Sigmoid colon (tissue), 7 donors: ENCODE measurements at regions of chr4 and their contacts with region 1.

Region 1: DNA sequence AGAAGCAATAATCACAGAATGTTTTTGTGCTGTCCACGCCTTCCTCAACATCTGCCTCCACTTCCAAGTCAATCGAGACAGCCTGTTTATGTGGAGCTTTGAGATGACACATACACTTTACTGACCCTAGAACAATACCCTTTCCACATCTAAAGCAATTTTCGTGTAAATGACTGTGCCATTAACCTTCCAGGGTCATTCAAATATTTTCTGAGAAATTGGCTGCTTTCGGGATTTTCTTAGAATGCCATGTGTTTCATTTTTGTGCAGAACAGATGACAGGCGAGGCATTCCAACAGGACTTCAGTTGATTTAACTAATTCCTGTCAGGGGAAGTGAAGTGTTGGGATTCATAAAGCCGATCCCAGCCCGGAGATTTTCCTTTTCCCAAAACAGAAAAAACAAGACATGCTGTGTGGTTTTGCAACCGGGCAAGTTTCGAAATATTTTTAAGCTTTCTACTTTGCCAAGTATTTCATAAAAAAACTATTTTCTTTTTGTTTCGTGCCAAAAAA is 73.9 kb downstream of the SORBS2 start:
- DNase-seq: peak; percentile 76
- H3K4me3 ChIP-seq: peak overlapping the region; percentile 4 to 38 (median 15)
- H3K27ac ChIP-seq: peak overlapping the region; percentile 81 to 88 (median 84)
- H3K4me1 ChIP-seq: peaks cover 0 to 85% (median 65%) of the 10 kb centered on the region in 4 donors
- H3K27me3 ChIP-seq: no peaks in the 10 kb centered on the region
- CTCF ChIP-seq: no peak
- EP300 ChIP-seq: no peak
- POLR2A ChIP-seq: no peak

Region 2: DNA sequence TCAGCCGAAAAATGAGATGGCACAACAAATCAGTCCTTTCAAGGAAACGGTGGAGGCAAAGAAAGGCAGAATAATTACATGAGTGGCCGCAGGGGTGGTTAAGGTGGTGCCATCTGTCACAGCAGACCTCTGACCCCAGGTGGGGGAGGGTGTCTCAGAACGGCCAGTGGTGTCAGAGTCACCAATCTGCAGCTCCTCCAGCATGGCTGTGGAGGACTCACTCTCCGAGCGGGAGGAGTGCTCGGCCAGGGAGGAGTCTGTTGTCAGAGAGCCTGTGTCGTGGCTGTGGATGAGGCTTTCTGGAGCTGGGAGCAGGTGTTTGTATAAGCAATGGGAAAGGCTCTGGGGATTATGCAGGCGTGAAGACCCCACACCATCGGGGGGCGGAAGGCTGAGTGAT is 72.4 kb before region 1 on chr4:
- intact Hi-C with region 1: no loop called
- DNase-seq: no peak
- H3K4me3 ChIP-seq: no peak overlapping the region
- H3K27ac ChIP-seq: peak overlapping the region in 1 of 4 donors; percentile 16
- H3K4me1 ChIP-seq: peaks cover 0 to 15% (median 8%) of the 10 kb centered on the region in 4 donors
- H3K27me3 ChIP-seq: no peaks in the 10 kb centered on the region
- CTCF ChIP-seq: no peak
- EP300 ChIP-seq: no peak
- POLR2A ChIP-seq: no peak

Region 3: GRCh38 chr4:185796176-185796575 is 58.1 kb after region 1 on chr4:
- intact Hi-C with region 1: loop called (anchors 5 kb)
- DNase-seq: no peak
- H3K4me3 ChIP-seq: no peak overlapping the region
- H3K27ac ChIP-seq: peak overlapping the region in 3 of 4 donors; percentile 72 to 82 (median 72)
- H3K4me1 ChIP-seq: peaks cover 0 to 67% (median 53%) of the 10 kb centered on the region in 4 donors
- H3K27me3 ChIP-seq: no peaks in the 10 kb centered on the region
- CTCF ChIP-seq: no peak
- EP300 ChIP-seq: no peak
- POLR2A ChIP-seq: no peak

Region 4: DNA sequence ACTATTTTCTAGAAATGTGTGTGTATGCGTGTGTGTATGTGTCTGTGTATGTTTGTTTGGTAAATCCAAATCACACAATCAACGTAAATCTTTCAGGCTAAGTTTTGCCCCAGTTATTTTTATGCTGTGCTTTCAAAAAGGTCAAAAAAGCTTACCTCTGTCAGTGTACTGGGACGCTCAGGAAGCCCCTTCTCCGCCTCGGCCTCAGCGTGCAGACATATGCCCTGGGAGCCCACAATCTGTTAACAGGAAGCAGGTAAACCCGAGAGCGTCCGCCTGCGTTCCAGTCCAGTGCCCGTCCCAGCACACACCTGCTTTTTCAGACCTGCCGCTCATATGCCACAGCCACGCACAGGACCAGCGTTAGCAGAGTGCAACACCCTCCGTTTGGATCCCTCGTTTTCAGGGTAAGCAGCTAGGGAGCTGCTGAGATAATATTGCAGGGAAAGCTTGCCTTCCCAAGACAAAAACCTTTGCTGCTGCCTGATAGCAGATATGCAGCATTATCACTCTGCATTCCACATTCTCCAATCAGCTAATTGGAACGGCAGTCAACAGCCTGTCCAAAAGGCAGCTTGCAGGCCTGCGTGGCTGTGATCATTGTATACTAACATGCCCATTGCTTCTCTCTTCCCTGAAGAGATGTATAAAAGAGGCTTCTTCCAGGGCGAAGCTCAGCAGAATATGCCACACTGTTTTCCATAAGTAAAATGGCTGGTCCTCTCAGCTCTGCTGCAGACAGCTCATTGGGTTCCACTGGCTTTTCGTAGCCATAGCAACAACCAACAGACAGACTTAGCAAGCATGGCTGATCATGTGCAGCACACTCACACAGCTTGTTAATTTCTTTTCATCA is 73.6 kb after region 1 on chr4 and contains the start of gene SORBS2:
- intact Hi-C with region 1: loop called (anchors 1 kb)
- DNase-seq: peak; percentile 73
- H3K4me3 ChIP-seq: peak within 1 kb of the TSS; percentile 42 to 62 (median 56)
- H3K27ac ChIP-seq: peak within 1 kb of the TSS; percentile 30 to 87 (median 82)
- H3K4me1 ChIP-seq: peaks cover 0 to 19% (median 7%) of the 10 kb centered on the region in 4 donors
- H3K27me3 ChIP-seq: no peaks in the 10 kb centered on the region
- CTCF ChIP-seq: no peak
- EP300 ChIP-seq: no peak
- POLR2A ChIP-seq: no peak
- total RNA-seq, gene SORBS2: 849 to 1,032 (median 869) TPM

Region 5: GRCh38 chr4:186191200-186192065 is 453.3 kb after region 1 on chr4 and contains the start of gene CYP4V2:
- intact Hi-C with region 1: no loop called
- DNase-seq: peak; percentile 91
- H3K4me3 ChIP-seq: peak within 1 kb of the TSS; percentile 79 to 89 (median 82)
- H3K27ac ChIP-seq: peak within 1 kb of the TSS; percentile 93 to 99 (median 98)
- H3K4me1 ChIP-seq: peaks cover 0 to 40% (median 31%) of the 10 kb centered on the region in 4 donors
- H3K27me3 ChIP-seq: no peaks in the 10 kb centered on the region
- CTCF ChIP-seq: peak in 1 of 4 experiments; percentile 6
- EP300 ChIP-seq: peak in 1 of 4 donors; percentile 4
- POLR2A ChIP-seq: peak; percentile 46 to 67
- total RNA-seq, gene CYP4V2: 30.0 to 75.3 (median 34.7) TPM

Region 6: GRCh38 chr4:186587416-186588018 is 849.4 kb after region 1 on chr4:
- intact Hi-C with region 1: no loop called
- DNase-seq: peak; percentile 83
- H3K4me3 ChIP-seq: no peak overlapping the region
- H3K27ac ChIP-seq: no peak overlapping the region
- H3K4me1 ChIP-seq: peaks cover 0 to 6% (median 0%) of the 10 kb centered on the region in 4 donors
- H3K27me3 ChIP-seq: no peaks in the 10 kb centered on the region
- CTCF ChIP-seq: peak; percentile 48 to 87 (median 76)
- EP300 ChIP-seq: no peak
- POLR2A ChIP-seq: no peak